Kidney (tissue), 22 donors: ENCODE measurements at regions of chr1 and their contacts with region 1.

Region 1: GRCh38 chr1:150578965-150579798 is at the start of gene MCL1:
- DNase-seq: peak; percentile 96 to 98 (median 97)
- H3K4me3 ChIP-seq: peak within 1 kb of the TSS; percentile 96 to 99 (median 97)
- H3K27ac ChIP-seq: peak within 1 kb of the TSS; percentile 100
- H3K4me1 ChIP-seq: peaks cover 10 to 25% (median 11%) of the 10 kb centered on the region in 3 donors
- H3K27me3 ChIP-seq: no peaks in the 10 kb centered on the region
- CTCF ChIP-seq: peak; percentile 19
- total RNA-seq, gene MCL1: 253 TPM

Region 2: GRCh38 chr1:150529017-150529416 is 50.2 kb before region 1 on chr1:
- intact Hi-C with region 1: no loop called
- DNase-seq: peak in 1 of 5 donors; percentile 36
- H3K4me3 ChIP-seq: no peak overlapping the region
- H3K27ac ChIP-seq: no peak overlapping the region
- H3K4me1 ChIP-seq: no peaks in the 10 kb centered on the region
- H3K27me3 ChIP-seq: no peaks in the 10 kb centered on the region
- CTCF ChIP-seq: no peak

Region 3: DNA sequence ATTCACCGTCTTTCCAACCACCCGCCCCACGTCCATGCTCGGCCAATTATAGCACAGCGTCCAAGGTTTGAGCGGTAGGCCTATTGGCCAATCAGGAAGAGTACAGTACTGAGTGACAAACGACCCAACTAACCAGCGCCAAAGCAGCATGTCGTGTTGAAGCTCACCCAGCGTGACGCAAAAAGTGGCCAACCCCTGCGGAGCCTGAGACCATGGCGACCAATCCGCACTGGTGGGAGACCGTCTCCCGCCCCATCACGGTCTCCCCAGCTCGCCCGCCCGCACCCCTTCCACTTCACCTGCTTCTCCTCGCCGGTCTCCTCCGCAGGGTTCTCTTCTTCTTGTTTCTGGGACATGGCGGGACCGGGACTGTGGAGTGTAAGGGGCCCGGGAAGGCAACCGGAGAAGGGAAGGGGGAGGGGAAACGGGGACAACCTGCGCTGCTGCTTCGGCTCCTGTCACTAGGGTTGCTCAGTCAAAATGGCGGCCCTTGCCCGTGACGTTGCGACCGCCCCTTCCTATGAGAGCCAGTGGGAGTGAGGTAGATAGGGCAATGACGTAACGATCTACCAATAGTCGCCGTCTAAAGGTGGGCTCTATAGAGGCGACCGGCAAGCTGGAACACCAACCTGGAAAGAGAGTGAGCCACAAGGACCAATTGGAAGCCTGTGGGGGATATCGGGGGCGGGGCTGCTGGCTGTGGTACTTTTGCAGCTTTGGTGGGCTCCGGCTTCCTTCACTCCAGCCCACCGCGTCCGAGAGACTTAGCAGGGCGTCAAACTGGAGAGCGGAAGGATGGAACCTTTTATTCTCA is 50.1 kb after region 1 on chr1 and contains the start of gene ENSA:
- intact Hi-C with region 1: loop called (anchors 10 kb)
- DNase-seq: peak; percentile 99 to 100 (median 99)
- H3K4me3 ChIP-seq: peak within 1 kb of the TSS; percentile 90 to 96 (median 93)
- H3K27ac ChIP-seq: peak within 1 kb of the TSS; percentile 98 to 99
- H3K4me1 ChIP-seq: peaks cover 4 to 9% (median 5%) of the 10 kb centered on the region in 3 donors
- H3K27me3 ChIP-seq: no peaks in the 10 kb centered on the region
- CTCF ChIP-seq: no peak
- total RNA-seq, gene ENSA: 193 TPM